PC-3 (cell line): ENCODE measurements at regions of chrX and their contacts with region 1.

Region 1: DNA sequence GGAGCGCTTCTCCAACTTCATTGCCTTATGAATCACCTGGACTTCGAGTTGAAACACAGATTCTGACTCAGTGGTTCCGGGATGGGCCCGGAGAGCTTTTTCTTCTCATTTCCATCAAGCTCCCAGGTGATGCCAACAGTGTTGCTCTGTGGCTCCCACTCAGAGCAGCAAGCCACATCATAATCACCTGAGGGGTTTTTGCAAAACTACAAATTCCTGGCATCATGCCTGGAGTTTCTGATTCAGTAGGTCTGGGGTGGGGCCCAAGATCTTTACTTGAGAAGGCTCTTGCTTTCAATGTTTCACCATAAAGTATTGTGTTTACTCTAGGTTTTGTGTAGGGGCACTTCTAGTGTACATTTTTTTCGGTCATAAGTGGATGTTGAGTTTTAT is 7.0 kb downstream of the MTM1 start:
- DNase-seq: peak; percentile 98
- ATAC-seq: peak; percentile 79
- H3K4me3 ChIP-seq: peak overlapping the region; percentile 54; the same call in 1 of the 2 replicates
- H3K27ac ChIP-seq: peak overlapping the region; percentile 80
- H3K4me1 ChIP-seq: peaks cover 69% of the 10 kb centered on the region
- H3K27me3 ChIP-seq: no peaks in the 10 kb centered on the region
- CTCF ChIP-seq: no peak

Region 2: GRCh38 chrX:150643271-150643670 is 67.9 kb after region 1 on chrX:
- CTCF ChIA-PET with region 1: no interaction called
- POLR2A ChIA-PET with region 1: no interaction called
- intact Hi-C with region 1: loop called (anchors 5 kb)
- DNase-seq: peak; percentile 42
- ATAC-seq: peak; percentile 64
- H3K4me3 ChIP-seq: no peak overlapping the region
- H3K27ac ChIP-seq: no peak overlapping the region
- H3K4me1 ChIP-seq: no peaks in the 10 kb centered on the region
- H3K27me3 ChIP-seq: no peaks in the 10 kb centered on the region
- CTCF ChIP-seq: peak; percentile 56; the same call in 1 of the 2 replicates